Sciatic nerve (tissue), 2 donors: ENCODE measurements at regions of chr1 and their contacts with region 1.

Region 1: DNA sequence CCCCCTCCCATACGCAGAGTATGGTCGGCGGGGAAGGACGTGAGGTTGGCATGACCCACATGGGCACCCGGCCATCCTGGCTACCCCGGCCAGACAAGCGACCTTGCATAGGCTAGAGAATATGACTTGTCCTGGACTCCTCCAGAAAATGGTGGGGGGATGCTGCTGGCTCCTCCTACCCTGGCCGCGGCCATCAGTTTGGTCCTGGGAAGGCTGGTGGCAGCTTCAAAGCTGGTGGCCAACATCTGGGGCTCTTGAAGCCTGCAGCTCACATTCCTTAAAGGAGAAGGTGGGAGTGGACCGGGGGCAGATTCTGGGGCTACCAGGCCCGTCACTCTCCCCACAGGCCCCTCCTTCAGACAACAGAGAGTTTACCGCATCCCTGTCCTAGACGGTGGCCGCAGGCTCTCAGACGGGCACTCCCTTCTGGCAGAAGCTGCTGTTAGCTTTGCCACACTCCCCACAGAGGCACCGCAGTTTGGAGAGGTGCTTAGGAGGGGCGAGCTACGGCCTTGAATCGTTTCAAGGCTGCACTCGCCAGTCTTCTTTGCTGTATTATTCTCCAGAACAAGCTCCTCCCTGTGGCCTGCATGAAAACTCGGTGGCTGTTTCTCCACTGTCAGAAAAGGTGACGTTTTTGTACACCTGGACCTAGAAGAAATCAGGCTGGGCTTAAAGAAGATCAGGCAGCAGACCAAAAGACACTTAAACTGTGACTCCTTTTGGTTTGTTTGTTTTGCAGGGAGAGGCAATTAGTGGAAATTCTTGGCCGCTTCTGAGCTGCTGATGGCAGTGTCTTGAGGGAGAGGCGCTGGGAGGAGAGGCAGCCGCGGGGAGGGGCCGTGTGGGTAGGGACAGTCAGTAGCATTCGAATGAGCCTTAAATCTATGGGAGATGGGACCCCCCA is 68.0 kb downstream of the RUNX3 start:
- DNase-seq: no peak
- ATAC-seq: no peak

Region 2: GRCh38 chr1:24830680-24831272 is 31.3 kb before region 1 on chr1:
- intact Hi-C with region 1: no loop called
- DNase-seq: no peak
- ATAC-seq: peak; percentile 87

Region 3: DNA sequence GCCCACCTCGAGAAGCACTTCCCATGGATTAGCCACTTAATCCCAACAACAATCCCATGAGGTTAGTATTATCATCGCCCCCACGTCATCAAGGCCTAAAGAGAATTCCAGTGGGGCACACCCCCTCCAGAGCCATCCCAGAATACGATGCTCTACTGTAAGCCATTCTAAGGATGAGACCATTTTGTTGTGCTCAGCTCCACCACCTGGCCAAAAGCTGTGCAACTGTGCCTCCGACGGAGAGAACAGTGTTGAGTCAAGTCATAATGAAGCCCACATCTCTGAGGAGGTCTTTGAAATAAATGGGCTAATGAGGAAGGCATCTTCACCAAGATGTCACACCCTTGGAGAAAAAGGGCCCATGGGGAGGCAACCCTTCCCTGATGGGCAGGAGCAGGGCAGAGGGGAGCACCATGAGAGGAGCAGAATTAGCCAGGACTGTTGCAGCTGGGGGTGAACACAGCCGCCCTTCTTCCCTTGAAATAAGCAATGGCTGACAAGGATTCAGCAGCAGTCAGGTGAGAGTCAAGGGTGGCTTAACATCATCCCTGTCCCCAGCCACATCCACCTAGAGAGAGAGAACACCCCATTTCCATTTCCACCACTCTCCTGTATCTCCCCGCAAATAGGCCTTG is 355.6 kb after region 1 on chr1:
- intact Hi-C with region 1: loop called (anchors 10 kb)
- DNase-seq: peak; percentile 6
- ATAC-seq: no peak